Ascending aorta (tissue), 2 donors: ENCODE measurements at regions of chr11 and their contacts with region 1.

Region 1: GRCh38 chr11:128472128-128473089 is 114.9 kb downstream of the ETS1 start:
- DNase-seq: no peak
- H3K4me3 ChIP-seq: no peak overlapping the region
- H3K27ac ChIP-seq: peak overlapping the region in 1 of 2 donors; percentile 18
- H3K4me1 ChIP-seq: peaks cover 6 to 20% of the 10 kb centered on the region in 2 donors
- H3K27me3 ChIP-seq: no peaks in the 10 kb centered on the region
- CTCF ChIP-seq: no peak

Region 2: GRCh38 chr11:128052912-128053641 is 419.3 kb before region 1 on chr11:
- intact Hi-C with region 1: loop called (anchors 10 kb)
- DNase-seq: no peak
- H3K4me3 ChIP-seq: no peak overlapping the region
- H3K27ac ChIP-seq: peak overlapping the region; percentile 69 to 78
- H3K4me1 ChIP-seq: peaks cover 8 to 17% of the 10 kb centered on the region in 2 donors
- H3K27me3 ChIP-seq: no peaks in the 10 kb centered on the region
- CTCF ChIP-seq: no peak

Region 3: DNA sequence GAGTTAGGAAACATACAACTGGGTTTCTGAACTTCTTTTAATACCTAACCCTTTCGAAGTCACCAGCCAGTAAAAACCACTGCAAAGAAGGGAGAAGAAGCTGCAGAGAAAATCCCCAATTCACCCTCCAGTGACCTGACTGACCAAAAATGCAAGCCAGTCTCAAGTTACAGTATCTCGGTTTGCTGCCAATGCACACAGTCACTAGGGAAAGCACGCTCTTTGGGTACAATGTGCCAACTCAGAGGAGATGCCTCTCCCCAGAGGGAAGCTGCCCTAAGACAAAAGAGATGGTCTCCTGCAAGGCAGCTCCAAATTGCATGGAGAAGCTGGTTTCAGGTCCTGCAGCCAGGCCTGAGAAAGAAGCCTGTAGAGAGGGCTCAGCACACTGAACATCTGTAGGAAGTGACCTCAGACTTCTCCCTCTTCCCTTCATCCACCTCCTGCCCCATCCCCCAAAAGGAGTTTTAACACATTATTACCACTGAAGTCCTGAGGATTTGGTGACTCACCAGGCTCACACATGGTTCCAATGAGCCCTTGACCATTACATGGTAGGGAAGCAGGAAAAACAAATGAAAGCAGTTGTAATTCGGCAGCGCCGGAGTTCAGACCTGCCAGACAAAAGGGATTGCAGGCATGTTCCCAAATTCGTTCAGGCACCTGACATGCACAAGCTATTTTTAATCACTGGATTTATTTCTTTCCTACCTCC is 24.8 kb after region 1 on chr11:
- intact Hi-C with region 1: loop called (anchors 2 kb)
- DNase-seq: peak in 1 of 2 donors; percentile 77
- H3K4me3 ChIP-seq: peak overlapping the region in 1 of 2 donors; percentile 34
- H3K27ac ChIP-seq: peak overlapping the region; percentile 76 to 80
- H3K4me1 ChIP-seq: peaks cover 11 to 76% of the 10 kb centered on the region in 2 donors
- H3K27me3 ChIP-seq: no peaks in the 10 kb centered on the region
- CTCF ChIP-seq: no peak

Region 4: DNA sequence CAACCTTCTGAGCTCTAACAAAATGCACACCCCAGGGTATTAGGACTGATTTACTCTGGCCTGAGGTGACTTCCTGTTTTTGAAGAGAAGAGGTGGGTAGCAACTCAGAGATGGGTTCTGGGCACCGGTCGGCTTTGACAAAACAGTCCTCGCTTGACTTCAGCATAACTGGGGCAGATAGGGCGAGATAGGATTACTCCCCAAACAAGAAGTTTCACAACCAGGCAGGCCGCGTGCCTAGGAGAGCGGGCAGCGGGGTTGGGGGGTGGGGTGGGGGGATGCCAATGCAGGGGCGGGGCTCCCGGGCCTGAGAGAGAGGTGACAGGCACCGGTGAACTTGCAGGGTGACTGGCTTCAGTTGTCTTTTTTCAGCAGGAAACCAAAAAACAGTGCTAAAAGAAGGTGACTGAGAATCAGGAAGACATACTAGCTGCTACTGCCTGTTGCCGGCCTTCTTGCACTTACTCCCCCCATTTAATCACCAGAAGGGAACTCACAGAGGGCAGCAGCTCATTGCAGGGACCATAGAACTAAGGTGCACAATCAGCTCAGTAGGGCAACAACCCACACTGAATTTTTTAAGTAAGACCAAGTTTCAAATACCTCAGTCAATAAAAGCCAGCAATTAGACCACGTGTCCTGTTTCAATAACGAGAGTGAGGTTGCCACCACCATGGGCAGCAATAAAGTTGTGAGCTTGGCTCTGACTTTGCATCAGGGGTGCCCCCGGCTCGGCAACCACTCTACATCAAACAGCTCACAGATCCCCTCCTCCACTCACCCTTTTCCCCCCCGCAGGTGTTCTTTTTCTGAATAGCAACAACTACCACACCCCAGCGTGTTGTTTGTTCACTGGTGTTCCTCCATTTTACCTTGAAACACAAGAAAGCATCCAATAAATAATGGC is 152.1 kb after region 1 on chr11:
- intact Hi-C with region 1: loop called (anchors 5 kb)
- DNase-seq: no peak
- H3K4me3 ChIP-seq: no peak overlapping the region
- H3K27ac ChIP-seq: no peak overlapping the region
- H3K4me1 ChIP-seq: no peaks in the 10 kb centered on the region
- H3K27me3 ChIP-seq: no peaks in the 10 kb centered on the region
- CTCF ChIP-seq: no peak